ENCODE measurements at regions of chr1 and their contacts with region 1.

Region 1: DNA sequence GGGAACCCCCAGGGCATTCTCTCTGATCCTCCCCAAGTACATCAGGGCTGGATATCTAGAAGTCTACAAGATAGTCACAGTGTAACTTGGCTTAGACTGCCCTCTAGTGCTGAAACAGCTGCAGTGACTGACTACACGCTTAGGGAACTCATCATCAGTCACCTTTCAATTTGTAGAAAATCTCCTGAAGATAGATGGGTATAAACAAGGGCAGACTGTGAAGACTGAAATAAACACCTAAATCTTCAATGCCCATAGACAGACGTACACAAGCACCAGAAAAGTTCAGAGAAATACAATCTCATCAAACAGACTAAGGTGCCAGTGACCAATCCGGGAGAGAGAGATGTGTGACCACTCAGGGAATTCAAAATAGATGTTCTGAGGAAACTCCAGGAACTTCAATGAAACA is 46.6 kb downstream of the PACC1 start:
- DNase-seq: peak; percentile 41 to 67
- H3K4me3 ChIP-seq: no peak overlapping the region
- H3K27ac ChIP-seq: no peak overlapping the region
- H3K4me1 ChIP-seq: no peaks in the 10 kb centered on the region
- H3K27me3 ChIP-seq: no peaks in the 10 kb centered on the region
- CTCF ChIP-seq: peak; percentile 87

Region 2: DNA sequence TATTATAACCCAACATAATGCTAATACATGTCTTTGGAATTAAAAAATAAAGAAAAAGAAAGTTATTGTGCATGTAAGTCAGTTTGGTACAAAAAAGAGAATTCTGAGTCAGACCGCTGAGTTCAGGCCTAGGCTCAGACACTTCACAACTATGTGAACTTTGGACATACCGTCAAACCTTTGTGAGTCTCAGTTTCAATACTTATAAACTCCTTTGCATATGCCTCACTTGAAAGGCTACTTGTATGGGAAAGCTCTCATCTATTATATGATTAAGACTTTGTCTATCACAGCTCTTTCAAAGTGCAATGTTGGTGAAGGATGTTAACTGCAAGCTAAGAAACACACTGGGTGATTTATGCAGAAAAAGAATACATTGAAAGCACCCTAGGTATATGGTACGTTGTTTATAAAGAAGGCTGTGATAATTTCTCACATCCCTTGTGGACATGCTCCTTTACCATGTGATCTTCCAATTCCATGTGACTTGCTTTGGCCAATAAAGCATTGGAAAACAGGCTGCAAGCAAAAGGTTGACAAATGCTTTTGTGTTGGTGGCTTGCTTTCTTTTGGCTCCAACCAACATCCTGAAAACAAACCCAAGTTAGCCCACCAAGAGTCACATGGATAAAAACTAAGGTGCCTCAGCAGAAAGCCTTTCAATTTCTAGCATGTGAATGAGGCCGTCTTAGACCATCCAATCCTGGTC is 382.4 kb before region 1 on chr1:
- CTCF ChIA-PET with region 1: no interaction called
- POLR2A ChIA-PET with region 1: interaction called, 22 read pairs
- intact Hi-C with region 1: no loop called
- DNase-seq: no peak
- H3K4me3 ChIP-seq: no peak overlapping the region
- H3K27ac ChIP-seq: no peak overlapping the region
- H3K4me1 ChIP-seq: no peaks in the 10 kb centered on the region
- H3K27me3 ChIP-seq: no peaks in the 10 kb centered on the region
- CTCF ChIP-seq: no peak

Region 3: GRCh38 chr1:212070720-212071302 is 297.3 kb before region 1 on chr1:
- CTCF ChIA-PET with region 1: interaction called, 14 read pairs
- POLR2A ChIA-PET with region 1: no interaction called
- intact Hi-C with region 1: loop called (anchors 2 kb)
- DNase-seq: no peak
- H3K4me3 ChIP-seq: no peak overlapping the region
- H3K27ac ChIP-seq: no peak overlapping the region
- H3K4me1 ChIP-seq: no peaks in the 10 kb centered on the region
- H3K27me3 ChIP-seq: no peaks in the 10 kb centered on the region
- CTCF ChIP-seq: peak; percentile 75

Region 4: GRCh38 chr1:212994926-212995325 is 626.8 kb after region 1 on chr1:
- CTCF ChIA-PET with region 1: no interaction called
- POLR2A ChIA-PET with region 1: no interaction called
- intact Hi-C with region 1: loop called (anchors 1 kb)
- DNase-seq: no peak
- H3K4me3 ChIP-seq: no peak overlapping the region
- H3K27ac ChIP-seq: no peak overlapping the region
- H3K4me1 ChIP-seq: no peaks in the 10 kb centered on the region
- H3K27me3 ChIP-seq: no peaks in the 10 kb centered on the region
- CTCF ChIP-seq: no peak

Region 5: DNA sequence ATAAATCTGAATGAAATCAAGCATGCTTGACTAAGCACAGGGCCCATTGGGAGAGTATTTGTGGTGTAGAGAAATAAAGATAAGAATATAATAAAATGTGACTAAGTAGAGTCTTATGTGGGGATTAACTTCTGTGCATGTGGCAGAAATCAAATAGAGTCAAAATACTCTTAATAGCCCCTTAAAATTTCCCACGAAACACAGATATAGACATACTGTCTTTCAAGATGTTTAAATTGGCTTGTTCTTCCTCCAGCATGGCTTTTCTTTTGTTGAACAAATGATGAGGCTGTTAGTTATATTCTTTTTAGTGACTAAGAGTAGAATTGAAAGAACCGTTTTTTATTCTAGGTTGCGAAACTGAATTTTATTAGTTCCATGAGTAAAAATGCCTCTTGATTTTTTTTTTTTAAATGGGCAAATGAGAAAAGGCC is 795.2 kb after region 1 on chr1:
- CTCF ChIA-PET with region 1: interaction called, 12 read pairs
- POLR2A ChIA-PET with region 1: no interaction called
- intact Hi-C with region 1: no loop called
- DNase-seq: no peak
- H3K4me3 ChIP-seq: no peak overlapping the region
- H3K27ac ChIP-seq: no peak overlapping the region
- H3K4me1 ChIP-seq: no peaks in the 10 kb centered on the region
- H3K27me3 ChIP-seq: no peaks in the 10 kb centered on the region
- CTCF ChIP-seq: no peak